Heart right ventricle (tissue), 16 donors: ENCODE measurements at regions of chr9 and their contacts with region 1.

Region 1: GRCh38 chr9:87080512-87081264 is 133.4 kb upstream of the GAS1 start:
- DNase-seq: no peak
- ATAC-seq: peak in 5 of 8 donors; percentile 20 to 76 (median 57)
- H3K4me3 ChIP-seq: no peak overlapping the region
- H3K27ac ChIP-seq: no peak overlapping the region
- H3K4me1 ChIP-seq: peaks cover 0 to 9% (median 5%) of the 10 kb centered on the region in 9 donors
- H3K27me3 ChIP-seq: peaks cover 0 to 6% (median 0%) of the 10 kb centered on the region in 7 donors
- CTCF ChIP-seq: peak in 2 of 9 donors; percentile 16 to 24

Region 2: DNA sequence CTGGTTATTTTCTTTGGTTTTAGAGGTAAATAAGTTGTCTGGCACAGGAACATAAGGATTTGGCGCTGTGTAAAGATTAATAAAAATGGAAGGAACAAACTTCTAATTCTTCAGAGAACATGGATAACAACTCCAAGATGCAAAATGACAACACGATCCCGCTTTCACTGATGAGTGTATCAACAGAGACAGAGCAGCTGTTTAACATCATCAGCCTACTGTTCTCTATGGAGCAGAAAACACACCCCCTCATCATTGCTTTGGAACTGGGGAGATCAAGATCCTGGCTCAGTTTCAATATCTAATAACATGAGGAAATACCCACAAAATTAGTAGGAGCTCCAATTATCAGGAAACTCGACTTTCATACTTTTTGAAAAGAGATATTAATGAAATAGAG is 125.1 kb before region 1 on chr9:
- intact Hi-C with region 1: loop called in 1 of 10 experiments (anchors 10 kb)
- DNase-seq: no peak
- ATAC-seq: no peak
- H3K4me3 ChIP-seq: no peak overlapping the region
- H3K27ac ChIP-seq: no peak overlapping the region
- H3K4me1 ChIP-seq: no peaks in the 10 kb centered on the region
- H3K27me3 ChIP-seq: peaks cover 0 to 31% (median 4%) of the 10 kb centered on the region in 7 donors
- CTCF ChIP-seq: no peak

Region 3: GRCh38 chr9:86978922-86979474 is 101.7 kb before region 1 on chr9:
- intact Hi-C with region 1: loop called in 1 of 10 experiments (anchors 10 kb)
- DNase-seq: no peak
- ATAC-seq: peak in 4 of 8 donors; percentile 15 to 43 (median 38)
- H3K4me3 ChIP-seq: no peak overlapping the region
- H3K27ac ChIP-seq: peak overlapping the region in 6 of 10 donors; percentile 12 to 51 (median 34)
- H3K4me1 ChIP-seq: peaks cover 0 to 21% (median 3%) of the 10 kb centered on the region in 9 donors
- H3K27me3 ChIP-seq: no peaks in the 10 kb centered on the region
- CTCF ChIP-seq: no peak